Activated T-helper 2 cell treated with anti-CD3 and anti-CD28 coated beads, Interferon-gamma antibody, Interleukin-2, Interleukin-4, amounts not matched to agents 10 μg/mL and 5 μg/mL and 100 μg/mL, durations not matched to agents 14 hours and 24 hours and 36 hours (primary cell): ENCODE measurements at regions of chr13 and their contacts with region 1.

Region 1: GRCh38 chr13:32905063-32905863 is 111.0 kb upstream of the KL start:
- DNase-seq: peak; percentile 26
- H3K4me3 Mint-ChIP-seq: peak overlapping the region; percentile 71
- H3K27ac Mint-ChIP-seq: peak overlapping the region; percentile 86
- H3K4me1 Mint-ChIP-seq: peaks cover 35% of the 10 kb centered on the region
- H3K27me3 Mint-ChIP-seq: peaks cover 5% of the 10 kb centered on the region

Region 2: GRCh38 chr13:32737111-32737571 is 168.1 kb before region 1 on chr13:
- intact Hi-C with region 1: loop called (anchors 2 kb)
- DNase-seq: no peak
- H3K4me3 Mint-ChIP-seq: peak overlapping the region; percentile 68
- H3K27ac Mint-ChIP-seq: peak overlapping the region; percentile 61
- H3K4me1 Mint-ChIP-seq: peaks cover 38% of the 10 kb centered on the region
- H3K27me3 Mint-ChIP-seq: no peaks in the 10 kb centered on the region

Region 3: GRCh38 chr13:32840989-32841713 is 64.1 kb before region 1 on chr13:
- intact Hi-C with region 1: loop called (anchors 1 kb)
- DNase-seq: no peak
- H3K4me3 Mint-ChIP-seq: no peak overlapping the region
- H3K27ac Mint-ChIP-seq: no peak overlapping the region
- H3K4me1 Mint-ChIP-seq: peaks cover 28% of the 10 kb centered on the region
- H3K27me3 Mint-ChIP-seq: peaks cover 2% of the 10 kb centered on the region

Region 4: DNA sequence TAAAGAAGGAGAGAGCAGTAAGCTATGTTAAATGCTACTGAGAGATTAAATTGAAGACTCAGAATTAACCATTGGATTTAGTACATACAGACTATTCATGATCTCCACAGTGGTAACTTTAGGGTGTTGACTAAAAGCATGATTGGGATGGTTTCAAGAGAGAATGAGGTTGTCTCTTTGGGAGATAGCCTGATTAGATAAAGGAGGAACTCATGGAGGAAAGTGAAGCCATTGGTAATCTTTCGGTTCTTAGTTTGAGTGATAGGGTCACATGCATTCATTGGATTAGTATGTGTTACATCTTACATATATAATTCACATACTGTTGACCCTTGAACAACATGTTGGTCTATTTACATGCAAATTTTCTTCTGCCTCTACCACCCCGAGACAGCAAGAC is 92.1 kb after region 1 on chr13:
- intact Hi-C with region 1: loop called (anchors 5 kb)
- DNase-seq: no peak
- H3K4me3 Mint-ChIP-seq: no peak overlapping the region
- H3K27ac Mint-ChIP-seq: no peak overlapping the region
- H3K4me1 Mint-ChIP-seq: no peaks in the 10 kb centered on the region
- H3K27me3 Mint-ChIP-seq: peaks cover 12% of the 10 kb centered on the region